ENCODE measurements at regions of chr5 and their contacts with region 1.

Region 1: GRCh38 chr5:88690409-88691229 is 192.4 kb downstream of the MEF2C start:
- DNase-seq: peak; percentile 62
- ATAC-seq: peak; percentile 97
- H3K4me3 Mint-ChIP-seq: peak overlapping the region; percentile 81
- H3K27ac Mint-ChIP-seq: peak overlapping the region; percentile 84
- H3K4me1 Mint-ChIP-seq: peaks cover 23% of the 10 kb centered on the region
- H3K27me3 Mint-ChIP-seq: peaks cover 73% of the 10 kb centered on the region
- CTCF ChIP-seq: peak; percentile 90

Region 2: GRCh38 chr5:86880785-86881492 is 1809.7 kb before region 1 on chr5:
- CTCF ChIA-PET with region 1: no interaction called
- POLR2A ChIA-PET with region 1: no interaction called
- intact Hi-C with region 1: loop called (anchors 2 kb)
- DNase-seq: no peak
- ATAC-seq: peak; percentile 60
- H3K4me3 Mint-ChIP-seq: no peak overlapping the region
- H3K27ac Mint-ChIP-seq: no peak overlapping the region
- H3K4me1 Mint-ChIP-seq: no peaks in the 10 kb centered on the region
- H3K27me3 Mint-ChIP-seq: peaks cover 2% of the 10 kb centered on the region
- CTCF ChIP-seq: no peak

Region 3: GRCh38 chr5:87780831-87781760 is 909.5 kb before region 1 on chr5:
- CTCF ChIA-PET with region 1: interaction called, 66 read pairs
- POLR2A ChIA-PET with region 1: no interaction called
- intact Hi-C with region 1: loop called (anchors 1 kb)
- DNase-seq: peak; percentile 49
- ATAC-seq: peak; percentile 99
- H3K4me3 Mint-ChIP-seq: no peak overlapping the region
- H3K27ac Mint-ChIP-seq: no peak overlapping the region
- H3K4me1 Mint-ChIP-seq: peaks cover 2% of the 10 kb centered on the region
- H3K27me3 Mint-ChIP-seq: peaks cover 15% of the 10 kb centered on the region
- CTCF ChIP-seq: peak; percentile 86

Region 4: GRCh38 chr5:88660947-88661805 is 29.4 kb before region 1 on chr5:
- CTCF ChIA-PET with region 1: interaction called, 19 read pairs
- POLR2A ChIA-PET with region 1: no interaction called
- intact Hi-C with region 1: loop called (anchors 1 kb)
- DNase-seq: no peak
- ATAC-seq: no peak
- H3K4me3 Mint-ChIP-seq: peak overlapping the region; percentile 73
- H3K27ac Mint-ChIP-seq: no peak overlapping the region
- H3K4me1 Mint-ChIP-seq: peaks cover 18% of the 10 kb centered on the region
- H3K27me3 Mint-ChIP-seq: peaks cover 62% of the 10 kb centered on the region
- CTCF ChIP-seq: no peak

Region 5: GRCh38 chr5:88680253-88681132 is 10.1 kb before region 1 on chr5:
- CTCF ChIA-PET with region 1: interaction called, 28 read pairs
- POLR2A ChIA-PET with region 1: interaction called, 7 read pairs
- intact Hi-C with region 1: loop called (anchors 1 kb)
- DNase-seq: peak; percentile 74
- ATAC-seq: peak; percentile 74
- H3K4me3 Mint-ChIP-seq: peak overlapping the region; percentile 24
- H3K27ac Mint-ChIP-seq: no peak overlapping the region
- H3K4me1 Mint-ChIP-seq: peaks cover 12% of the 10 kb centered on the region
- H3K27me3 Mint-ChIP-seq: peaks cover 61% of the 10 kb centered on the region
- CTCF ChIP-seq: no peak

Region 6: DNA sequence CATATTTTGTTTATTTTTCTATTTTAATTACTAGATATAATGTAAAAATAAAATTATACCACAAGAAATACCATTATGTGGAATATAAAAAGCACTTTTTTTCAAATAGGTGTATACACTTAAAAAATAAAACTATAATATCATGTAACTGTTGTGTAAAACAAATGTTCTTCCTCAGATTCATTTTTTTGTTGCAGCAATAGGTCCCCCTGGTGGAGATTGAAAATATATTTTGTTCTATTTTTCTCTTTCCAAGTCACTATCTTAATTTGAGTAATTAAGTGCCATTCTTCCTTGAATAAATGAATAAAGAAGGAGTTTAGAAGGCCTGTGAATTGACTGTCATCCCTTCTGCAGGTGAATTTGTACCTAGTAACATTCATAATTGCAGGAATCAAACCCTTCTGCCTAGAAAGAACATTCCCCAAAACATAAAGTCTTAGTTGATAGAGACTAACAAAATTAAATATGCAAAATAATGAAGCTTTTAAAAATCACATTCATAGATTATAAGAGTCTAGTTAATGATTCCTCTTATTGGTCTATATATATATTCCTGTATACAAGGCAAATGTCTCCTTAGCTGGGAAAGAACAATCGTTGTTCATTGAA is 1695.6 kb after region 1 on chr5:
- CTCF ChIA-PET with region 1: no interaction called
- POLR2A ChIA-PET with region 1: no interaction called
- intact Hi-C with region 1: loop called (anchors 10 kb)
- DNase-seq: no peak
- ATAC-seq: no peak
- H3K4me3 Mint-ChIP-seq: no peak overlapping the region
- H3K27ac Mint-ChIP-seq: no peak overlapping the region
- H3K4me1 Mint-ChIP-seq: no peaks in the 10 kb centered on the region
- H3K27me3 Mint-ChIP-seq: peaks cover 5% of the 10 kb centered on the region
- CTCF ChIP-seq: no peak